ENCODE measurements at regions of chr12 and their contacts with region 1.

Region 1: GRCh38 chr12:22624870-22625761 is at the start of gene ETNK1:
- DNase-seq: peak; percentile 89
- H3K4me3 Mint-ChIP-seq: peak within 1 kb of the TSS; percentile 100
- H3K27ac Mint-ChIP-seq: peak within 1 kb of the TSS; percentile 99
- H3K4me1 Mint-ChIP-seq: peaks cover 22% of the 10 kb centered on the region
- H3K27me3 Mint-ChIP-seq: no peaks in the 10 kb centered on the region
- CTCF ChIP-seq: no peak
- total RNA-seq, gene ETNK1: 38.2 and 38.3 TPM in 2 replicates

Region 2: GRCh38 chr12:22459838-22460490 is 165.2 kb before region 1 on chr12:
- CTCF ChIA-PET with region 1: interaction called, 11 read pairs
- POLR2A ChIA-PET with region 1: no interaction called
- intact Hi-C with region 1: loop called (anchors 5 kb)
- DNase-seq: peak; percentile 64
- H3K4me3 Mint-ChIP-seq: no peak overlapping the region
- H3K27ac Mint-ChIP-seq: no peak overlapping the region
- H3K4me1 Mint-ChIP-seq: no peaks in the 10 kb centered on the region
- H3K27me3 Mint-ChIP-seq: no peaks in the 10 kb centered on the region
- CTCF ChIP-seq: peak; percentile 55

Region 3: DNA sequence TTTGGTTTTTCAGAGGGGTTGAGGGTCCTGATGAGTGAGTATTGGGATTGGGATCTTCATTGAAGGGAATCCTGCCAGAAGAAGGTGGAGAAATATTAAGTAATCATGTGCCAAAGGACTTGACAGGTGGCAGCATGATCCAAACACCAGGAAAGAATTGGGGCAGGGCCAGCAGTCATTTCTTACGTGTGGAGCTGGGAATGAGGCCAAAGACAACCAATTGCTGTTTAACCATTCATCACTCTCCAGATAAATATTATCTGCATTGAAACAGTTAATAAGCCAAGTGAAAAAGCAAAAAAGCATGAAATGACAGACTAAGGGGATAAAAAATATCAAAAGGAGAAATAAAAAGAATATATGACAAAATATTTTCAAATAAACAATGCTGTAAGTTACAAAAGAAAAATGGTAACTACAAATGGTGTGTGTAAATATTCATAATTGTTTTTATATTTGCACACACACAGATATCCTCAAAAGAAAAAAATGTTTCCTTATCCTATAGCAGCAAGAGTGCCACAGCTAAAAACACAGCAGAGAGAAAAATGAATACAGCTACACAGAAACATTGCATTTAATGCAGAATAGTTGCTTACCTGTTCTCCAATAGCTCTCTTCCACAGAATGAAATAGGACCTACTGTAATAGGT is 106.9 kb before region 1 on chr12:
- CTCF ChIA-PET with region 1: no interaction called
- POLR2A ChIA-PET with region 1: interaction called, 17 read pairs
- intact Hi-C with region 1: no loop called
- DNase-seq: peak; percentile 95
- H3K4me3 Mint-ChIP-seq: no peak overlapping the region
- H3K27ac Mint-ChIP-seq: peak overlapping the region; percentile 55
- H3K4me1 Mint-ChIP-seq: peaks cover 17% of the 10 kb centered on the region
- H3K27me3 Mint-ChIP-seq: no peaks in the 10 kb centered on the region
- CTCF ChIP-seq: no peak

Region 4: GRCh38 chr12:22529281-22530060 is 95.6 kb before region 1 on chr12:
- CTCF ChIA-PET with region 1: interaction called, 7 read pairs
- POLR2A ChIA-PET with region 1: interaction called, 10 read pairs
- intact Hi-C with region 1: loop called (anchors 5 kb)
- DNase-seq: peak; percentile 48
- H3K4me3 Mint-ChIP-seq: no peak overlapping the region
- H3K27ac Mint-ChIP-seq: no peak overlapping the region
- H3K4me1 Mint-ChIP-seq: peaks cover 7% of the 10 kb centered on the region
- H3K27me3 Mint-ChIP-seq: no peaks in the 10 kb centered on the region
- CTCF ChIP-seq: peak; percentile 13

Region 5: GRCh38 chr12:22544038-22544979 is 80.8 kb before region 1 on chr12 and contains the start of gene C2CD5:
- CTCF ChIA-PET with region 1: interaction called, 5 read pairs
- POLR2A ChIA-PET with region 1: interaction called, 82 read pairs
- intact Hi-C with region 1: loop called (anchors 2 kb)
- DNase-seq: peak; percentile 97
- H3K4me3 Mint-ChIP-seq: peak within 1 kb of the TSS; percentile 86
- H3K27ac Mint-ChIP-seq: peak within 1 kb of the TSS; percentile 84
- H3K4me1 Mint-ChIP-seq: peaks cover 23% of the 10 kb centered on the region
- H3K27me3 Mint-ChIP-seq: no peaks in the 10 kb centered on the region
- CTCF ChIP-seq: peak; percentile 27
- total RNA-seq, gene C2CD5: 16.9 and 21.4 TPM in 2 replicates